ENCODE measurements at regions of chr5 and their contacts with region 1.

Region 1: GRCh38 chr5:102666164-102666946 is 88.8 kb upstream of the PAM start:
- DNase-seq: no peak
- ATAC-seq: no peak

Region 2: DNA sequence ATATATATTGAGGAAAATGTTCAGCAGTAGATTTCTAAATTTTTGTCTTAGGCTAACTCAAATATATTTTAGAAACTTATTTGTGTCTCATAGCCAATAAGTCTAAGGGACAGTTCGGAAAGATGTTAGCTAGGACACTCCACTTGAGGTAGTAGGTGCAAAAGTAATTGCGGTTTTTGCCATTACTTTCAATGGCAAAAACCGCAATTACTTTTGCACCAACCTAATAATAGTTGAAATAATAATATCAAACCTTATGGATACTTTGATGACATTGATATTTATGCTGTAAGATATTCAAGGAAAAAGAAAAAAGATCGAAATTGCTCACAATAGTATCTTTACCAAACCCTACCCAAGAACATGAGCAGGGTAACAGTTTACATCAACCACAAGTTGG is 1207.8 kb before region 1 on chr5:
- intact Hi-C with region 1: no loop called
- DNase-seq: no peak
- ATAC-seq: no peak

Region 3: DNA sequence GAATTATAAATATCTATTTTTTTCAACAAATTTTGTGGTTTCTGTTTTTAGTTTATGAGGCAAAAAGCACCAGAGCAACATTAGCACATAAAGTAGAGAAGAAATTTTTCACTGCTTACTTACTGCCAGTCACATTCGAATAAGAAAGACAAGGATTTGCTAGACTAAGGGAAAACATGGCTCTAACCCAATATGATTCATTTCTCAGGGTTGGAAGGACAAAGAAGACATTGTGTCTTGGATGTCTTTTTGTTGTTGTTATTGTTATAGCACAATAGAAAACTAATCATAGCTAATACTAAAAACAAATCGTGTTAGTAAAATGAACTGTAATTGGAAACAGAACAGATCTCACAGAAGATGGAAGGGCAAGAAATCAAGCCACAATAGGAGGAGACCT is 76.7 kb before region 1 on chr5:
- intact Hi-C with region 1: loop called (anchors 5 kb)
- DNase-seq: no peak
- ATAC-seq: no peak

Region 4: GRCh38 chr5:103364074-103364473 is 697.7 kb after region 1 on chr5:
- intact Hi-C with region 1: no loop called
- DNase-seq: no peak
- ATAC-seq: no peak